Activated T-helper 2 cell treated with anti-CD3 and anti-CD28 coated beads, Interferon-gamma antibody, Interleukin-2, Interleukin-4, amounts not matched to agents 10 μg/mL and 5 μg/mL and 100 μg/mL, durations not matched to agents 14 hours and 24 hours and 36 hours (primary cell): ENCODE measurements at regions of chr17 and their contacts with region 1.

Region 1: GRCh38 chr17:31216053-31216751 is 80.8 kb downstream of the OMG start:
- DNase-seq: no peak
- H3K4me3 Mint-ChIP-seq: no peak overlapping the region
- H3K27ac Mint-ChIP-seq: no peak overlapping the region
- H3K4me1 Mint-ChIP-seq: no peaks in the 10 kb centered on the region
- H3K27me3 Mint-ChIP-seq: no peaks in the 10 kb centered on the region

Region 2: DNA sequence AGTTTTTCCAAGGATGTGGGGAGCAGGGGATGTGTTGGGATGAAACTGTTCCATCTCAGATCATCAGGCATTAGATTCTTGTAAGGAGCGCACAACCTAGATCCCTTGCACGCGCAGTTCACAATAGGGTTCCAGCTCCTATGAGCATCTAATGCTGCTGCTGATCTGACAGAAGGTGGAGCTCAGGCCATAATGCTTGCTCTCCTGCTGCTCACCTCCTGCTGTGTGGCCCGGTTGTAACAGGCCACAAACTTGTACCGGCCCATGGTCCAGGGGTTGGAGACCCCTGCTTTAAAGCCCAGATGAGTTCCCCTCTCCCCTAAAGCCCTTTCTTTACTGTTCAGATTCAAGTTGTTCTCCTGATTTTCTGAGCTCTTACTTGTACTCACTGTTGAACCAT is 200.6 kb before region 1 on chr17:
- intact Hi-C with region 1: loop called (anchors 2 kb)
- DNase-seq: no peak
- H3K4me3 Mint-ChIP-seq: no peak overlapping the region
- H3K27ac Mint-ChIP-seq: no peak overlapping the region
- H3K4me1 Mint-ChIP-seq: peaks cover 5% of the 10 kb centered on the region
- H3K27me3 Mint-ChIP-seq: peaks cover 9% of the 10 kb centered on the region